Natural killer cell (primary cell): ENCODE measurements at regions of chr12 and their contacts with region 1.

Region 1: GRCh38 chr12:25386831-25387731 is 136.4 kb upstream of the KRAS start:
- DNase-seq: peak; percentile 60 to 93
- ATAC-seq: peak; percentile 13 to 28 (median 22)
- H3K4me3 ChIP-seq: peak overlapping the region; percentile 68
- H3K4me3 Mint-ChIP-seq: peak overlapping the region; percentile 97
- H3K27ac ChIP-seq: peak overlapping the region; percentile 89
- H3K27ac Mint-ChIP-seq: peak overlapping the region; percentile 99 to 100
- H3K4me1 ChIP-seq: peaks cover 13% of the 10 kb centered on the region
- H3K4me1 Mint-ChIP-seq: peaks cover 25 to 41% of the 10 kb centered on the region in 2 donors
- H3K27me3 ChIP-seq: no peaks in the 10 kb centered on the region
- H3K27me3 Mint-ChIP-seq: no peaks in the 10 kb centered on the region
- CTCF ChIP-seq: peak; percentile 84

Region 2: GRCh38 chr12:24991209-24992049 is 395.7 kb before region 1 on chr12:
- intact Hi-C with region 1: loop called (anchors 1 kb)
- DNase-seq: peak in 1 of 2 donors; percentile 84
- ATAC-seq: peak; percentile 90 to 98 (median 96)
- H3K4me3 ChIP-seq: no peak overlapping the region
- H3K4me3 Mint-ChIP-seq: no peak overlapping the region
- H3K27ac ChIP-seq: no peak overlapping the region
- H3K27ac Mint-ChIP-seq: no peak overlapping the region
- H3K4me1 ChIP-seq: no peaks in the 10 kb centered on the region
- H3K4me1 Mint-ChIP-seq: no peaks in the 10 kb centered on the region
- H3K27me3 ChIP-seq: no peaks in the 10 kb centered on the region
- H3K27me3 Mint-ChIP-seq: peaks cover 7 to 13% of the 10 kb centered on the region in 2 donors
- CTCF ChIP-seq: peak; percentile 75

Region 3: DNA sequence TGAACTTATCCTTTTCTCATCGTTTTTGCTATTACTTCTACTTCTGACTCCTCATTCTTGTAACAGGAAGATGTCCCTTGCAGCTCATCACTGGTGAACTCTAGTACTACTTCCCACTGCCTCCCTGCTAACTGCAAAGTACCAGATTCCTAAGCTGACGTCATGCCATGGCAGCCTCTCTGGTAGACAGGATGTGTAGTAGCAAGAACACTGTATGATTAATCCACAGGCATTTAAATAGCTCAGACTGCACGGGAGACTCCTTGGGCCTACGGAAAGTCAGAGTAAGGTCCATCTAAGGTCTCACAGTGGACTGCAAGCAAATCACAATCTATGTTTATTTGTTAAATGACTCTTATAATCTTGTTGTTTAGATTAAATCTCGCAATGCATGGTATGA is 235.6 kb before region 1 on chr12:
- intact Hi-C with region 1: loop called (anchors 1 kb)
- DNase-seq: no peak
- ATAC-seq: no peak
- H3K4me3 ChIP-seq: no peak overlapping the region
- H3K4me3 Mint-ChIP-seq: no peak overlapping the region
- H3K27ac ChIP-seq: no peak overlapping the region
- H3K27ac Mint-ChIP-seq: no peak overlapping the region
- H3K4me1 ChIP-seq: no peaks in the 10 kb centered on the region
- H3K4me1 Mint-ChIP-seq: no peaks in the 10 kb centered on the region
- H3K27me3 ChIP-seq: no peaks in the 10 kb centered on the region
- H3K27me3 Mint-ChIP-seq: no peaks in the 10 kb centered on the region
- CTCF ChIP-seq: no peak

Region 4: DNA sequence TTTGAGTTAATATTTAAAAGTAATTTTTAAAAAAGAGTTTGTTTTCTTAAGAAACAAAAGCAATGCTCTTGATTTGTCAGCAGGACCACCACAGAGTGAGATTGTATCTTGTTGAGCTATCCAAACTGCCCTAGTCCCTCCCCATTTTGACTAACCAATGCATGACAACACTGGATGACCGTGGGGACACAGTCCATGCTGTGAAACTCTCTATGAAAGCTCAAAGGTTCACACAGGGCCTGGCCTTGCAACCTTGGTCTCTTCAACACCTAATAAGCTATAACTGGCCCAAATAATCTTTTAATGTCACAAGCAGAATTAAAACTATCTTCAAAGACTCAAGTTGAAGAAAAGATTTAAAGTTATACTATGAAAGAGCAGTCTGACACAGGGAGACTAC is 178.5 kb before region 1 on chr12:
- intact Hi-C with region 1: loop called (anchors 1 kb)
- DNase-seq: no peak
- ATAC-seq: no peak
- H3K4me3 ChIP-seq: no peak overlapping the region
- H3K4me3 Mint-ChIP-seq: no peak overlapping the region
- H3K27ac ChIP-seq: no peak overlapping the region
- H3K27ac Mint-ChIP-seq: peak overlapping the region in 1 of 2 donors; percentile 57
- H3K4me1 ChIP-seq: no peaks in the 10 kb centered on the region
- H3K4me1 Mint-ChIP-seq: no peaks in the 10 kb centered on the region
- H3K27me3 ChIP-seq: no peaks in the 10 kb centered on the region
- H3K27me3 Mint-ChIP-seq: no peaks in the 10 kb centered on the region
- CTCF ChIP-seq: no peak

Region 5: DNA sequence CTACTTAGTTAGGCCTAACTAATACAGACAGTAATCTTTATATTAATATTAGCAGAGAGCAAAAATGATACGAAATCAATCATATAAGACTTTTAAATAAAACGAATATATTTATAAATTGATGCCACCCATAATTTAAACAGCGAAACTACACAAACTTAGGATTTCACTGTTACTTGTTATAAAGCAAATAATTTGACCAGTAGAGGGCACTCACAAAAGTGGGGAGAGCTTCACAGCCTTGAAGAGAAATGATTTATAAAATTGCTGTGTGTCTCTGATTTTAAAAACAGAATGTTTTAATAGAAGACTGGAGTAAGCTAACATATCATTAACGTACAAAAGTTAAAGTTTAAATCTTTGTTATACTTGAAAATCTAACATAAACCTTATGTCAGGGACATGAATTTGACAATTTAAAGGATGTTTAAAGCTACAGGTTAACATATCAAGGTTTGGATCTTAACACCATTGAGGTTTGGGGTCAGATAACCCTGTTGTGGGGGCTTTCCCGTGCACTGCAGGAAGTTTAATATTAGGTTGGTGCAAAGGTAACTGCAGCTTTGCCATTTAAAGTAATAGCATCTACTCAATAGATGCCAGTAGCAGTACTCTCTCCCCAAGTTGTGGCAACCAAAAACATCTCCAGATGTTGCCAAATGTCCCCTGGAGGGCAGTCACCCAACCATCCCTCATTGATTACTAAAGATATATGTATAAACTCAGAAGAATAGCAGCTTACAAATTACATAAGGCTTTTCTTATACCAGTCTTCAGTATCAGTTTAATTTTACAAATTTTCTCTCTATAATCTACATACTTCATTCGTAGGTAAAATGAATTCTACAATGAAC is 145.7 kb before region 1 on chr12:
- intact Hi-C with region 1: loop called (anchors 1 kb)
- DNase-seq: peak in 1 of 2 donors; percentile 78
- ATAC-seq: peak; percentile 85 to 90 (median 85)
- H3K4me3 ChIP-seq: no peak overlapping the region
- H3K4me3 Mint-ChIP-seq: no peak overlapping the region
- H3K27ac ChIP-seq: no peak overlapping the region
- H3K27ac Mint-ChIP-seq: peak overlapping the region; percentile 76 to 77
- H3K4me1 ChIP-seq: peaks cover 4% of the 10 kb centered on the region
- H3K4me1 Mint-ChIP-seq: peaks cover 20 to 24% of the 10 kb centered on the region in 2 donors
- H3K27me3 ChIP-seq: no peaks in the 10 kb centered on the region
- H3K27me3 Mint-ChIP-seq: no peaks in the 10 kb centered on the region
- CTCF ChIP-seq: peak; percentile 74

Region 6: GRCh38 chr12:25322918-25323532 is 64.1 kb before region 1 on chr12:
- intact Hi-C with region 1: loop called (anchors 1 kb)
- DNase-seq: peak in 1 of 2 donors; percentile 31
- ATAC-seq: peak in 1 of 3 donors; percentile 48
- H3K4me3 ChIP-seq: no peak overlapping the region
- H3K4me3 Mint-ChIP-seq: peak overlapping the region; percentile 78
- H3K27ac ChIP-seq: peak overlapping the region; percentile 57
- H3K27ac Mint-ChIP-seq: peak overlapping the region; percentile 76 to 85
- H3K4me1 ChIP-seq: peaks cover 11% of the 10 kb centered on the region
- H3K4me1 Mint-ChIP-seq: peaks cover 31 to 46% of the 10 kb centered on the region in 2 donors
- H3K27me3 ChIP-seq: no peaks in the 10 kb centered on the region
- H3K27me3 Mint-ChIP-seq: no peaks in the 10 kb centered on the region
- CTCF ChIP-seq: no peak